A673 (cell line): ENCODE measurements at regions of chr2 and their contacts with region 1.

Region 1: GRCh38 chr2:184765112-184765895 is 167.0 kb downstream of the ZNF804A start:
- DNase-seq: peak; percentile 88
- H3K4me3 ChIP-seq: peak overlapping the region; percentile 32
- H3K27ac ChIP-seq: peak overlapping the region; percentile 26
- H3K4me1 ChIP-seq: peaks cover 12% of the 10 kb centered on the region
- H3K27me3 ChIP-seq: no peaks in the 10 kb centered on the region
- CTCF ChIP-seq: no peak

Region 2: GRCh38 chr2:184611361-184612085 is 153.8 kb before region 1 on chr2:
- CTCF ChIA-PET with region 1: no interaction called
- POLR2A ChIA-PET with region 1: no interaction called
- intact Hi-C with region 1: loop called (anchors 10 kb)
- DNase-seq: peak; percentile 68
- H3K4me3 ChIP-seq: no peak overlapping the region
- H3K27ac ChIP-seq: no peak overlapping the region
- H3K4me1 ChIP-seq: no peaks in the 10 kb centered on the region
- H3K27me3 ChIP-seq: no peaks in the 10 kb centered on the region
- CTCF ChIP-seq: peak; percentile 66

Region 3: GRCh38 chr2:184654945-184655344 is 110.4 kb before region 1 on chr2:
- CTCF ChIA-PET with region 1: no interaction called
- POLR2A ChIA-PET with region 1: no interaction called
- intact Hi-C with region 1: loop called (anchors 5 kb)
- DNase-seq: peak; percentile 50
- H3K4me3 ChIP-seq: no peak overlapping the region
- H3K27ac ChIP-seq: no peak overlapping the region
- H3K4me1 ChIP-seq: peaks cover 18% of the 10 kb centered on the region
- H3K27me3 ChIP-seq: no peaks in the 10 kb centered on the region
- CTCF ChIP-seq: no peak

Region 4: GRCh38 chr2:184692141-184692734 is 73.1 kb before region 1 on chr2:
- CTCF ChIA-PET with region 1: no interaction called
- POLR2A ChIA-PET with region 1: no interaction called
- intact Hi-C with region 1: loop called (anchors 1 kb)
- DNase-seq: peak; percentile 95
- H3K4me3 ChIP-seq: no peak overlapping the region
- H3K27ac ChIP-seq: peak overlapping the region; percentile 64
- H3K4me1 ChIP-seq: peaks cover 28% of the 10 kb centered on the region
- H3K27me3 ChIP-seq: no peaks in the 10 kb centered on the region
- CTCF ChIP-seq: no peak